Activated naive CD4-positive, alpha-beta T cell treated with anti-CD3 and anti-CD28 coated beads for 36 hours (primary cell): ENCODE measurements at regions of chr2 and their contacts with region 1.

Region 1: GRCh38 chr2:26770986-26771602 is 7.0 kb downstream of the SLC35F6 start:
- DNase-seq: peak; percentile 64
- H3K4me3 Mint-ChIP-seq: no peak overlapping the region
- H3K27ac Mint-ChIP-seq: no peak overlapping the region
- H3K4me1 Mint-ChIP-seq: peaks cover 51% of the 10 kb centered on the region
- H3K27me3 Mint-ChIP-seq: no peaks in the 10 kb centered on the region

Region 2: GRCh38 chr2:26670171-26670570 is 100.9 kb before region 1 on chr2:
- CTCF ChIA-PET with region 1: no interaction called
- intact Hi-C with region 1: no loop called
- DNase-seq: no peak
- H3K4me3 Mint-ChIP-seq: no peak overlapping the region
- H3K27ac Mint-ChIP-seq: no peak overlapping the region
- H3K4me1 Mint-ChIP-seq: no peaks in the 10 kb centered on the region
- H3K27me3 Mint-ChIP-seq: peaks cover 18% of the 10 kb centered on the region

Region 3: DNA sequence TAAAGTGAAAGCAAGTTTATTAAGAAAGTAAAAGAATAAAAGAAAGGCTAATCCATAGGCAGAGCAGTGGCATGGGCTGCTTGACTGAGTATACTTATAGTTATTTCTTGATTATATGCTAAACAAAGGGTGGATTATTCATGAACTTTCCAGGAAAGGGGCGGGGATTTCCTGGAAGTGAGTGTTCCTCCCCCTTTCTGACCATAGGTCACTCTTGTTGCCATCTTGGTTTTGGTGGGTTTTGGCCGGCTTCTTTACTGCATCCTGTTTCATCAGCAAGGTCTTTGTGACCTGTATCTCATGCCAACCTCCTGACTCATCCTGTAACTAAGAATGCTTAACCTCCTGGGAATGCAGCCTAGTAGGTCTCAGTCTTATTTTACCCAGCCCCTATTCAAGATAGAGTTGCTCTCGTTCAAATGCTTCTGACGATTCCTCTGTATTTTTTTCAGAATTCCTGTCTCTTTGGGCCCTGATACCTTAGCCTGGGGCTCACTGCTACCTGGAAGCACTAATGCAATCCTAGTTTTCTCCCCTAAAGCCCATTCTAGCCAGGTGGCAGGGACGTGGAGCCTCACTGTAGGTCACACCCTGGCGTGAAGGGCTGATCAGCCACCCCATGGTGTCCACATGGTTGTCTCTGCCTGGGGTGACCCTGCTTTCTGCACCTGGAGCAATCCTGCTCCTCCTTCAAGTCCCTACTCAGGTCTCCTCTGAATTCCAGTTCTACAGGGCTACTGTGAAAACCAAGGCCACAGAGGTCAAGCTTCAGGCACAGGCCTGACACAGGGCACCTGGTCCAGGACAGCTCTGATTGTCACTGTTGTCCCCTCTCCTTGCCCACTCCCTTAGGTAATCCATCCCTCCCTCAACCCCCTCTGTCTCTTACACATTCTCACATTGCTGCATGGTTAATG is 13.0 kb before region 1 on chr2:
- CTCF ChIA-PET with region 1: interaction called, 11 read pairs
- intact Hi-C with region 1: no loop called
- DNase-seq: peak; percentile 50
- H3K4me3 Mint-ChIP-seq: no peak overlapping the region
- H3K27ac Mint-ChIP-seq: no peak overlapping the region
- H3K4me1 Mint-ChIP-seq: peaks cover 11% of the 10 kb centered on the region
- H3K27me3 Mint-ChIP-seq: no peaks in the 10 kb centered on the region

Region 4: GRCh38 chr2:26942543-26943295 is 171.6 kb after region 1 on chr2:
- CTCF ChIA-PET with region 1: no interaction called
- intact Hi-C with region 1: loop called (anchors 5 kb)
- DNase-seq: peak; percentile 81
- H3K4me3 Mint-ChIP-seq: no peak overlapping the region
- H3K27ac Mint-ChIP-seq: no peak overlapping the region
- H3K4me1 Mint-ChIP-seq: peaks cover 2% of the 10 kb centered on the region
- H3K27me3 Mint-ChIP-seq: peaks cover 6% of the 10 kb centered on the region